Activated T-helper 1 cell treated with anti-CD3 and anti-CD28 coated beads, Interleukin-12 subunit alpha, Interleukin-12 subunit beta, Interleukin-2, Interleukin-4 antibody, amounts not matched to agents 30 ng/mL and 10 ng/mL and 1 ng/mL, durations not matched to agents 14 hours and 24 hours and 36 hours (primary cell): ENCODE measurements at regions of chr16 and their contacts with region 1.

Region 1: GRCh38 chr16:68972720-68973119 is 129.4 kb downstream of the TANGO6 start:
- DNase-seq: no peak
- H3K4me3 Mint-ChIP-seq: no peak overlapping the region
- H3K27ac Mint-ChIP-seq: no peak overlapping the region
- H3K4me1 Mint-ChIP-seq: no peaks in the 10 kb centered on the region
- H3K27me3 Mint-ChIP-seq: no peaks in the 10 kb centered on the region

Region 2: DNA sequence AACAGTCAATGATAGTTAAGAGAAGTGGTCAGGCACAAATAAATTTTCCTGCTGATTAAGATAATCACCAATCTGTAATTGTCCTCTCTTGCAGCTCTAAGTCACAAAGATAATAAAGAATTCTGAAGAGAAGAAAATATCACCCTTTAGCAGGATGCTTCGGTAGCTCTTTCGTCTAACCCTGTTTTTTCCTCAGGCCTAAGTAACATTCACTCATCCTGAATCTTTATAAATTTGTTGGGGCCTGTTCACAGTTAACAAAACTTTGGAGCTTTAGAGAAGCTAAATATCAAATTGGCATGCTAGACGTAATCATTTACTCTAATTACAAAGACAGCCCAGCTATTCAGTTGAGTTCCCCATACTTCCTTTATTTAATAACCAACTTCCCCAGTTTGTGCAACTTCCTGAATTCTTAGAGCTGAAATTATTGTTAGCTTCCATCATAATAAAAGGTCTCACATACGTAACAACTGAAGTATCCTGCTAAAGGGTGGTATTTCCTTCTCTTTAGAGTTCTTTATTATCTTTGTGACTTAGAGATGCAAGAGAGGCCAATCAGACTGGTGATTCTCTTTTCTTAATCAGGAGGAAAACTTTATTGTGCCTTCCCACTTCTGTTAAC is 10.8 kb before region 1 on chr16:
- intact Hi-C with region 1: no loop called
- DNase-seq: no peak
- H3K4me3 Mint-ChIP-seq: no peak overlapping the region
- H3K27ac Mint-ChIP-seq: no peak overlapping the region
- H3K4me1 Mint-ChIP-seq: no peaks in the 10 kb centered on the region
- H3K27me3 Mint-ChIP-seq: no peaks in the 10 kb centered on the region

Region 3: GRCh38 chr16:68995011-68995504 is 22.3 kb after region 1 on chr16:
- intact Hi-C with region 1: loop called (anchors 2 kb)
- DNase-seq: no peak
- H3K4me3 Mint-ChIP-seq: no peak overlapping the region
- H3K27ac Mint-ChIP-seq: no peak overlapping the region
- H3K4me1 Mint-ChIP-seq: no peaks in the 10 kb centered on the region
- H3K27me3 Mint-ChIP-seq: peaks cover 2% of the 10 kb centered on the region

Region 4: GRCh38 chr16:69005641-69006355 is 33.1 kb after region 1 on chr16:
- intact Hi-C with region 1: no loop called
- DNase-seq: no peak
- H3K4me3 Mint-ChIP-seq: no peak overlapping the region
- H3K27ac Mint-ChIP-seq: no peak overlapping the region
- H3K4me1 Mint-ChIP-seq: no peaks in the 10 kb centered on the region
- H3K27me3 Mint-ChIP-seq: no peaks in the 10 kb centered on the region